ENCODE measurements at regions of chr4 and their contacts with region 1.

Region 1: GRCh38 chr4:174222266-174222872 is 61.1 kb downstream of the FBXO8 start:
- DNase-seq: no peak
- H3K4me3 ChIP-seq: no peak overlapping the region; a peak in 1 of 4 replicates
- H3K27ac ChIP-seq: peak overlapping the region in 1 of 2 experiments; percentile 36; a peak in 2 of 4 replicates
- H3K4me1 ChIP-seq: peaks cover 1 to 26% of the 10 kb centered on the region in 2 experiments; a peak in 3 of 4 replicates
- H3K27me3 ChIP-seq: no peaks in the 10 kb centered on the region
- CTCF ChIP-seq: peak; percentile 76
- EP300 ChIP-seq: no peak
- RAD21 ChIP-seq: peak; percentile 69

Region 2: DNA sequence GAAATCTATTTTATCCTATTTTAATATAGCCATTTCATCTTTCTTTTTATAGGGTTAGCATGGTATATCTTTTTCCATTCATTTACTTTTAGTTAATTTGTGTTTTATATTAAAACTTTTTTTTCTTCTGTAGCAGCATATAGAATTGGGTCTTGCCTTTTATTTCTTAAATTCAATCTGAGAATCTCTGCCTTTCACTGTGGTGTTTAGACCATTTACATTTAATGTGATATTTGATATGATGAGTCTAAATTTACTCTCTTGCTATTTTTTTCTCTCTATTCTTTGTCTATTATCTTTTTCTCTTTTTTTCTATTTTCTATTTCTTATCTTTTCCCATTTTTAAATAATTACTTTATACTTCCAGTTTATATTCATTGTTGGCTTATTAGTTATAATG is 587.0 kb before region 1 on chr4:
- CTCF ChIA-PET with region 1: no interaction called
- POLR2A ChIA-PET with region 1: no interaction called
- DNase-seq: no peak
- H3K4me3 ChIP-seq: no peak overlapping the region
- H3K27ac ChIP-seq: no peak overlapping the region
- H3K4me1 ChIP-seq: no peaks in the 10 kb centered on the region
- H3K27me3 ChIP-seq: no peaks in the 10 kb centered on the region
- CTCF ChIP-seq: no peak
- EP300 ChIP-seq: no peak
- RAD21 ChIP-seq: no peak

Region 3: GRCh38 chr4:174016251-174016650 is 206.1 kb before region 1 on chr4:
- CTCF ChIA-PET with region 1: no interaction called
- POLR2A ChIA-PET with region 1: no interaction called
- DNase-seq: no peak
- H3K4me3 ChIP-seq: no peak overlapping the region
- H3K27ac ChIP-seq: no peak overlapping the region; a peak in 1 of 4 replicates
- H3K4me1 ChIP-seq: peaks cover 0 to 26% of the 10 kb centered on the region in 2 experiments; a peak in 3 of 4 replicates
- H3K27me3 ChIP-seq: no peaks in the 10 kb centered on the region
- CTCF ChIP-seq: no peak
- EP300 ChIP-seq: no peak
- RAD21 ChIP-seq: no peak

Region 4: DNA sequence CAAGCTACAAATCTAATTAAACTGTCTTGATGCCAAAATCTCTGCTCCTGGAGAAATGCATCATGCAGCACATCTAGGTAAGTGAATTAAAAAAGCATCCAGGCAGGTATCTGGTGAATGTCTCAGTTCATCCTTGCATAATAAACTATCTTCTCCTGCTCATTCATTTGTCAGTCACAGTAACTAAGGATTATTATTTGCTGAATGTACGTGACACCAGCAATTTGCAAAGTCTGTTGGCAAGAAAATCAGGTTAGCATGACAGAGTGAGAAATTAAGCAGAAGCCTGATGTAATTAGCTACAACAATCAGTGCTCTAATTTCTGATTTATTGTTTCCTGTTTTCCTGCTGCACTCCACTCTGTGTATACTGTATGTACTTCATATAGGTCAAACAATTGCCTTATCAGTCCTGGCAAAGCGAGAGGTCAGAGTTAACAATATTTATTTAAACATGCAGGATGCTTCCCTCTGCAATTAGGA is 152.5 kb before region 1 on chr4:
- CTCF ChIA-PET with region 1: no interaction called
- POLR2A ChIA-PET with region 1: interaction called, 16 read pairs
- DNase-seq: peak; percentile 69
- H3K4me3 ChIP-seq: no peak overlapping the region
- H3K27ac ChIP-seq: peak overlapping the region in 1 of 2 experiments; percentile 100; a peak in 2 of 4 replicates
- H3K4me1 ChIP-seq: peaks cover 0 to 26% of the 10 kb centered on the region in 2 experiments; a peak in 2 of 4 replicates
- H3K27me3 ChIP-seq: no peaks in the 10 kb centered on the region
- CTCF ChIP-seq: no peak
- EP300 ChIP-seq: peak; percentile 82 to 100
- RAD21 ChIP-seq: peak; percentile 46

Region 5: DNA sequence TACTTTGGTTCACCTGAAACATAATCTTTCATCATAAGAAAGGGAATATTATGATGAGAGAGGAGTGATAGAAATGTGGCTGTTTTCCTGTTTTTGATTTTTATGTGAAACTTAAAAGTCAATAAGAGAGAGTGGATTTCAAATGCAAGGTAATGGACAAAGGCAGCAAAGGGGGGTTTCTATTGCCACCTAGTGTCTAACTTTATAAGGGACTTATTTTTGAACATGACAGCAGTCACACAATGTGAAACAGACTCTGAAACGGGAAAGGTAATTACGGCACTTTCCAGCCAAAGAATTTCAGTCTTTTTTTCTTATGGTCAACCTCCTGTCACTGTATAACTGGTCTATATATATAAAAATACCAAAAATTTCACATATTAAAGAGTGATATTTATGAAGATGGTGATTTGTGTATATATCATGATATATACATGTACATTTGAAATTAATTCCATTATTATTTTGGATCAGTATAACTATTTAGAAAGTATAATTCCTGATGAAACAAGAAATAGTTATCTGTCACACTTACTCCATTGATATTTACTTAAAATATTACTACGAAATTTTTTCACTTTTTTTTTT is 66.0 kb before region 1 on chr4:
- CTCF ChIA-PET with region 1: no interaction called
- POLR2A ChIA-PET with region 1: interaction called, 20 read pairs
- DNase-seq: peak; percentile 27
- H3K4me3 ChIP-seq: peak overlapping the region in 1 of 2 experiments; percentile 40; a peak in 1 of 4 replicates
- H3K27ac ChIP-seq: peak overlapping the region; percentile 74 to 100; a peak in 3 of 4 replicates
- H3K4me1 ChIP-seq: peaks cover 40 to 51% of the 10 kb centered on the region in 2 experiments; a peak in 3 of 4 replicates
- H3K27me3 ChIP-seq: no peaks in the 10 kb centered on the region
- CTCF ChIP-seq: peak; percentile 76
- EP300 ChIP-seq: peak in 1 of 2 experiments; percentile 56; a peak in 1 of 4 replicates
- RAD21 ChIP-seq: peak; percentile 94

Region 6: GRCh38 chr4:174198828-174199227 is 23.5 kb before region 1 on chr4:
- CTCF ChIA-PET with region 1: interaction called, 25 read pairs
- POLR2A ChIA-PET with region 1: interaction called, 67 read pairs
- DNase-seq: peak; percentile 51
- H3K4me3 ChIP-seq: peak overlapping the region; percentile 19 to 42; a peak in 2 of 4 replicates
- H3K27ac ChIP-seq: peak overlapping the region; percentile 83 to 99
- H3K4me1 ChIP-seq: peaks cover 18 to 42% of the 10 kb centered on the region in 2 experiments; a peak in 3 of 4 replicates
- H3K27me3 ChIP-seq: no peaks in the 10 kb centered on the region
- CTCF ChIP-seq: no peak
- EP300 ChIP-seq: peak; percentile 96 to 99
- RAD21 ChIP-seq: 0 out of 2 replicates have a peak, but pooled peaks have one; percentile 20

Region 7: DNA sequence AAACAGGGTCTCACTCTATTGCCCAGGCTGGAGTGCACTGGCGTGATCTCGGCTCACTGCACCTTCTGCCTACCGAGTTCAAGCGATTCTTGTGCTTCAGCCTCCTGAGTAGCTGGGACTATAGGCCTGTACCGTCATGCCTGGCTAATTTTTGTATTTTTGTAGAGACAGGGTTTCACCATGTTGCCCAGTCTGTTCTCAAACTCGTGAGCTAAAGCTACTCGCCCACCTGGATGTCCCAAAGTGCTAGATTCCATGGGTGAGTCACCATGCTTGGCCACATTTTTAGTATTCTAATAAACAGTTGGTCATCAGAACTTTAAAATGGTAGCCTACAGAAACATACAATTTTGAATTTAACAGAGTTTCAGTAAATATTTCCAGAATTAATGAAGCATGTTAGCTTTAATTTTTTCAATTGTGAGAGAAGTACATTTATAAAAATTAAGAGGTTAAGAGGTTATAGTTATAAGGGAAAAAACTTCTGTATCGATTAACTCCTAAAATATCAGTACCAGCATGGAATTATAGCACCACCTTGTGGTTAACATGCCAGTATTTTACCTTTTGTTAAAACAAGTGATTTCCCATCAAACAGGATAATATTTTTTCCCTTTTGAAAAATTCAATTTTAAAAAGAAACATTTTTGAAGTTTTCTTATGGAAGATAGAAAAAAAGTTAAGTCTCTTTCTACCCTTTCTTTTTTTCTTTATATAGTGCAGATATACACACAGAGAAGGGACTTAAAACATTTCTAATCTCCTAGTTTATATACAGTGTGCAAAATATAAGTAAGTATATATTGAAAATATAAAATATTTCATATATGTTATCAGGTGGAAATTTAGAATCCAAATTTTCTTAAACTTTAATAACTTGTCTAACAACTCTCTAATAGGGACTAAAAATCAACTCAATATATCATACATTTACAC is 96.7 kb after region 1 on chr4:
- CTCF ChIA-PET with region 1: interaction called, 10 read pairs
- POLR2A ChIA-PET with region 1: no interaction called
- DNase-seq: peak; percentile 34
- H3K4me3 ChIP-seq: no peak overlapping the region
- H3K27ac ChIP-seq: peak overlapping the region in 1 of 2 experiments; percentile 68; a peak in 2 of 4 replicates
- H3K4me1 ChIP-seq: peaks cover 10% of the 10 kb centered on the region in 2 experiments; a peak in 3 of 4 replicates
- H3K27me3 ChIP-seq: no peaks in the 10 kb centered on the region
- CTCF ChIP-seq: peak; percentile 93
- EP300 ChIP-seq: no peak
- RAD21 ChIP-seq: peak; percentile 84

Region 8: GRCh38 chr4:174389439-174389838 is 167.1 kb after region 1 on chr4:
- CTCF ChIA-PET with region 1: no interaction called
- POLR2A ChIA-PET with region 1: no interaction called
- DNase-seq: no peak
- H3K4me3 ChIP-seq: no peak overlapping the region
- H3K27ac ChIP-seq: no peak overlapping the region
- H3K4me1 ChIP-seq: no peaks in the 10 kb centered on the region
- H3K27me3 ChIP-seq: no peaks in the 10 kb centered on the region; the same call in 1 of the 2 replicates
- CTCF ChIP-seq: no peak
- EP300 ChIP-seq: no peak
- RAD21 ChIP-seq: no peak

Measured in SK-N-SH (cell line).